ENCODE measurements at regions of chr3 and their contacts with region 1.

Region 1: GRCh38 chr3:12135029-12135657 is 23.6 kb downstream of the TIMP4 start:
- DNase-seq: peak; percentile 74
- H3K4me3 ChIP-seq: no peak overlapping the region
- H3K27ac ChIP-seq: peak overlapping the region; percentile 9
- H3K4me1 ChIP-seq: peaks cover 36% of the 10 kb centered on the region
- H3K27me3 ChIP-seq: peaks cover 23% of the 10 kb centered on the region
- CTCF ChIP-seq: peak; percentile 94

Region 2: GRCh38 chr3:12175844-12176453 is 40.8 kb after region 1 on chr3:
- intact Hi-C with region 1: loop called (anchors 5 kb)
- DNase-seq: peak; percentile 65
- H3K4me3 ChIP-seq: no peak overlapping the region
- H3K27ac ChIP-seq: no peak overlapping the region
- H3K4me1 ChIP-seq: peaks cover 37% of the 10 kb centered on the region
- H3K27me3 ChIP-seq: no peaks in the 10 kb centered on the region
- CTCF ChIP-seq: peak; percentile 94

Region 3: GRCh38 chr3:12227833-12228232 is 92.7 kb after region 1 on chr3:
- intact Hi-C with region 1: no loop called
- DNase-seq: no peak
- H3K4me3 ChIP-seq: no peak overlapping the region
- H3K27ac ChIP-seq: no peak overlapping the region
- H3K4me1 ChIP-seq: no peaks in the 10 kb centered on the region
- H3K27me3 ChIP-seq: peaks cover 10% of the 10 kb centered on the region
- CTCF ChIP-seq: no peak

Region 4: GRCh38 chr3:12479919-12480425 is 344.8 kb after region 1 on chr3:
- intact Hi-C with region 1: loop called (anchors 5 kb)
- DNase-seq: peak; percentile 28
- H3K4me3 ChIP-seq: no peak overlapping the region
- H3K27ac ChIP-seq: peak overlapping the region; percentile 18
- H3K4me1 ChIP-seq: peaks cover 36% of the 10 kb centered on the region
- H3K27me3 ChIP-seq: no peaks in the 10 kb centered on the region
- CTCF ChIP-seq: peak; percentile 81